Mammary epithelial cell (primary cell): ENCODE measurements at regions of chr15 and their contacts with region 1.

Region 1: GRCh38 chr15:91522663-91523332 is 330.7 kb upstream of the SLCO3A1 start:
- DNase-seq: peak; percentile 66
- H3K4me3 ChIP-seq: no peak overlapping the region
- H3K27ac ChIP-seq: no peak overlapping the region
- H3K4me1 ChIP-seq: no peaks in the 10 kb centered on the region
- H3K27me3 ChIP-seq: no peaks in the 10 kb centered on the region
- CTCF ChIP-seq: peak; percentile 51 to 91

Region 2: DNA sequence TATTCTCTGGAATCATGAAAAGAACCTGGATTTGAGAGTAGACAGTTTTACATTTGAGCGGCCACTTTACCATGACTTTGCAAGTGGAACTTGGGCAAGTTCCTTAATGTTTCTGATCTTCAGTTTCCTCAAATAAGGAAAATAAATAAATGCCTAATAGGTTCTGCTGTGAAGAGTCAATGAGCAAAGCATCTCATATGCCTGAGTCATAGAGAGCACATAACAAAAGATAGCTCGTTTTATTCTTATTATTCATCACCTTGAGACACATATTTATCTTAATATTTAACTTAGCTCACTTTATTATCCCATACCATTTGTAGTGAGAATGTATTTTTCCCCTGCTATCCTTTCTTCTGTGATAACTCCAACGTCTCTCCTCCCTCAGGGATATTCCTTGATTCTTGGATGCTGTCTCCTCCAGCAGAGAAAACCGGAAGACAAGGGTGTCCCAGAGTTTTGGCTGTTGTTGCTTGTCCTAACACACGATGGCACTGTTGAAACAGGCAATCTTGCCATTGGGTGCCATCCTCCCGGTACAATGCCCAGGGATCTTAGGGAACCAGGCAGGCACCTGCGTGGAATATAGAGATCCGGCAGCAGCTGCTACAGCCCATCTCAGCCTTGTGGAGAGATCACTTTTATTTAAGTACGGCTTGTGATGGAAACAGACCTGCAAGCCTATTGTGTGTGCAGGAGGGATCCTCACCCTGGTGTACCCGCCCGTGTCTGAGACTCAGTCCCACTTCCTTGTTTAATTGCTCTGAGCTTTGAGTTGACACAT is 467.1 kb before region 1 on chr15:
- CTCF ChIA-PET with region 1: no interaction called
- dilution Hi-C with region 1: no loop called
- in situ Hi-C with region 1: loop called in 1 of 2 experiments (anchors 25 kb)
- intact Hi-C with region 1: loop called (anchors 2 kb)
- DNase-seq: peak; percentile 67
- H3K4me3 ChIP-seq: no peak overlapping the region
- H3K27ac ChIP-seq: no peak overlapping the region
- H3K4me1 ChIP-seq: no peaks in the 10 kb centered on the region
- H3K27me3 ChIP-seq: peaks cover 5% of the 10 kb centered on the region
- CTCF ChIP-seq: peak; percentile 89 to 90

Region 3: DNA sequence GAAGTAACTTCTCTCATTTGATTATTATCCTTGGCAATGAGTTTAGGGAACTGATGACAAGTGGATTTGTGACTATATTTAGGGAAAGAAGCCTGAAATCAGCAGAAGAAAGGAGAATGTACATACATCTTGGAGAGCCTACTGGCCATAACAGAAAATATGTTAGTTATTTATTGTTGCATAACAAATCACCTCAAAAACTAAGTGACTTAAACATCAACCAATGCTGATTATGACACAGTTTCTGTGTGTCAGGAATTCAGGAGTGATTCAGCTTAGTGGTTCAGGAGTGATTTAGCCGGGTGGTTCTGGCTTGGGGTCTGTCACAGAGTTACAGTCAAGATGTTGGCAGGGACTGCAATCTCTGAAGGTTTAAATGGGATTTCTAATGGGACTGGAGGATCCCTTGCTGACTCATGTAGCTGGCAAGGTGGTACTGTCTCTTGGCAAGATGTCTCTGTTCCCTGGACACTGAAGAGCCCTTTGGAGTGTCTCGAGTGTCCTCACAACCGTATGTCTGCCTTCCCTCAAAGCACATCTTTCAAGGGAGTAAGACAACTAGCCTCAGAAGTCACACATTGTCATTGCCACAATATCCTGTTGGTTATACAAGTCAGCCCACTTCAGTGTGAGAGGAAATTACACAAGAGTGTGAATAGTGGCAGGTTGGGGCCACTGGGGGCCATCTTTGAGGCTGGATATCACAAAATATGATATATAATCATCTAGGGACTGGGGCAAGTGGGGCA is 173.9 kb before region 1 on chr15:
- CTCF ChIA-PET with region 1: no interaction called
- dilution Hi-C with region 1: no loop called
- in situ Hi-C with region 1: no loop called
- intact Hi-C with region 1: loop called (anchors 2 kb)
- DNase-seq: peak; percentile 52
- H3K4me3 ChIP-seq: no peak overlapping the region
- H3K27ac ChIP-seq: no peak overlapping the region
- H3K4me1 ChIP-seq: no peaks in the 10 kb centered on the region
- H3K27me3 ChIP-seq: peaks cover 3% of the 10 kb centered on the region
- CTCF ChIP-seq: no peak

Region 4: GRCh38 chr15:91456251-91456738 is 66.5 kb before region 1 on chr15:
- CTCF ChIA-PET with region 1: no interaction called
- dilution Hi-C with region 1: no loop called
- in situ Hi-C with region 1: no loop called
- intact Hi-C with region 1: loop called (anchors 1 kb)
- DNase-seq: peak; percentile 100
- H3K4me3 ChIP-seq: no peak overlapping the region
- H3K27ac ChIP-seq: peak overlapping the region; percentile 92
- H3K4me1 ChIP-seq: peaks cover 18% of the 10 kb centered on the region
- H3K27me3 ChIP-seq: no peaks in the 10 kb centered on the region
- CTCF ChIP-seq: no peak

Region 5: GRCh38 chr15:91694831-91695210 is 172.0 kb after region 1 on chr15:
- CTCF ChIA-PET with region 1: no interaction called
- dilution Hi-C with region 1: no loop called
- in situ Hi-C with region 1: no loop called
- intact Hi-C with region 1: loop called (anchors 10 kb)
- DNase-seq: peak; percentile 61
- H3K4me3 ChIP-seq: peak overlapping the region; percentile 9 to 30 (median 25)
- H3K27ac ChIP-seq: peak overlapping the region; percentile 36
- H3K4me1 ChIP-seq: peaks cover 9% of the 10 kb centered on the region
- H3K27me3 ChIP-seq: no peaks in the 10 kb centered on the region
- CTCF ChIP-seq: no peak

Region 6: GRCh38 chr15:91942676-91943576 is 420.1 kb after region 1 on chr15:
- CTCF ChIA-PET with region 1: no interaction called
- dilution Hi-C with region 1: no loop called
- in situ Hi-C with region 1: no loop called
- intact Hi-C with region 1: loop called (anchors 2 kb)
- DNase-seq: peak; percentile 99
- H3K4me3 ChIP-seq: peak overlapping the region in 1 of 3 experiments; percentile 5
- H3K27ac ChIP-seq: peak overlapping the region; percentile 96
- H3K4me1 ChIP-seq: peaks cover 58% of the 10 kb centered on the region
- H3K27me3 ChIP-seq: no peaks in the 10 kb centered on the region
- CTCF ChIP-seq: no peak